Activated naive CD4-positive, alpha-beta T cell treated with anti-CD3 and anti-CD28 coated beads for 36 hours (primary cell): ENCODE measurements at regions of chr1 and their contacts with region 1.

Region 1: GRCh38 chr1:36187800-36188593 is 32.0 kb downstream of the MAP7D1 start:
- DNase-seq: peak; percentile 92
- H3K4me3 Mint-ChIP-seq: no peak overlapping the region
- H3K27ac Mint-ChIP-seq: peak overlapping the region; percentile 41
- H3K4me1 Mint-ChIP-seq: peaks cover 4% of the 10 kb centered on the region
- H3K27me3 Mint-ChIP-seq: no peaks in the 10 kb centered on the region

Region 2: DNA sequence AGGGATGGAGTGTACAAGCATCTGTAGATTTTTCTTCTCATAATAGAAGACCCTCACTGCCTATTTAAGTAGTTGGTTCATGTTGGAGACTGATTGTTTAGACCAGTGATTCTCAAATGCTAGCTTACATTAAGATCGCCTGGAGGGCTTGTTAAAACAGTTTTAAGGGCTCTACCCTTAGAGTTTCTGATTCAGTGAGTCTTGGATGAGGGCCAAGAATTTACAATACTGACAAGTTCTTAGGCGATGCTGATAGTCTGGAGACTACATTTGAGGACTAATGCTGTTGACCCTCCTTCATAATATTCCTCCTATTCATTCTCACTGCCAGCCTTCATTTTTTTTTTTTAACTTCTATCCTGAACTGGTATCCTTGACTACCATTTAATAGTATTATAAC is 272.3 kb before region 1 on chr1:
- CTCF ChIA-PET with region 1: no interaction called
- intact Hi-C with region 1: no loop called
- DNase-seq: no peak
- H3K4me3 Mint-ChIP-seq: no peak overlapping the region
- H3K27ac Mint-ChIP-seq: no peak overlapping the region
- H3K4me1 Mint-ChIP-seq: no peaks in the 10 kb centered on the region
- H3K27me3 Mint-ChIP-seq: no peaks in the 10 kb centered on the region

Region 3: GRCh38 chr1:36099681-36100341 is 88.2 kb before region 1 on chr1:
- CTCF ChIA-PET with region 1: interaction called, 10 read pairs
- intact Hi-C with region 1: loop called (anchors 1 kb)
- DNase-seq: peak; percentile 85
- H3K4me3 Mint-ChIP-seq: no peak overlapping the region
- H3K27ac Mint-ChIP-seq: no peak overlapping the region
- H3K4me1 Mint-ChIP-seq: peaks cover 4% of the 10 kb centered on the region
- H3K27me3 Mint-ChIP-seq: no peaks in the 10 kb centered on the region

Region 4: DNA sequence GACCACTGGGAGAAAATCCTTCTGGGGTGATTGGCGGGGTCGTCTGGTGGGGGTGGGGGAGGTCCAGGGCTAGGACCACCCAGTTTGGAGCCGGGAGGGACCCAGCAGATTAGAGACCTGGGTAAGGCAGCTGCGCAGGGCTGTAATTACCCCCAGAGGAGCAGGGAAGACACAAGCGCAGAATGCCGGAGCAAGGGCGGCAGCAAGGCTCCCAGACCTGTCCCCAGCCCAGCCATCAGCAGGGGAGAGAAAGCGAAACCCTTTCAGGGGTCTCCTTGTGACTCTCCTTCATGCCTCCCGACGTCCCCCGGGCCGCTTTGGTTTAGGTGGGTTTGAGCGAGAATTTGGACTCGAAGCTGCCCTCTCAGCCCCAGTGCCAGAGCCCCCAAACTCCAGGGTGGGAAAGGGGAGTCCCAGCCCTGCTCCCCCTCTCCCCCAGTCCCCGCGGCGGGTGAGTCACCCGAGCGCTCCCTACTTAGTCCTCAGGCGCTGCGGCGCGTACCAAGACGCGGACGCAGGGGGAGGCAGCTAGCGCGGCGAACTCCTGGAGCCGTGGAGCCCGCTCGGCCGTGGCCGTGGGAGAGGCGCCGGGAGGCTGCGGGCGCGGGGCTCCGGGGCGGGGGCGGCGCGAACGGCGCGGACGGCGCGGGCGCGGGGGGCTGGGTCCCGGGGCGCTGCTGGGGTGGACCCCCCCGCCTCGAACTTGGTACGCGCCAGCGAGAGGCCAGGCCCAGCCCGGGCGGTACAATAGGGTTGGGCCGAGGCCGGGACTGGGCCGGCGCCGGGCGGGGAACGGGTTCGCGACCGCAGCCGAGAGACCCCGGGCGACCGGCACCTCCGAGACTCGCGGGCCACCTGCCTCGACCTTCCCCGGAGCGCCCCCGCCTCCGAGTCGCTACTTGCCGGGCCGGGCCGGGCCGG is 32.3 kb before region 1 on chr1 and contains the start of gene MAP7D1:
- CTCF ChIA-PET with region 1: interaction called, 89 read pairs
- intact Hi-C with region 1: loop called (anchors 1 kb)
- DNase-seq: peak; percentile 88
- H3K4me3 Mint-ChIP-seq: peak within 1 kb of the TSS; percentile 90
- H3K27ac Mint-ChIP-seq: peak within 1 kb of the TSS; percentile 94
- H3K4me1 Mint-ChIP-seq: peaks cover 66% of the 10 kb centered on the region
- H3K27me3 Mint-ChIP-seq: no peaks in the 10 kb centered on the region
- total RNA-seq, gene MAP7D1: 106 TPM

Region 5: DNA sequence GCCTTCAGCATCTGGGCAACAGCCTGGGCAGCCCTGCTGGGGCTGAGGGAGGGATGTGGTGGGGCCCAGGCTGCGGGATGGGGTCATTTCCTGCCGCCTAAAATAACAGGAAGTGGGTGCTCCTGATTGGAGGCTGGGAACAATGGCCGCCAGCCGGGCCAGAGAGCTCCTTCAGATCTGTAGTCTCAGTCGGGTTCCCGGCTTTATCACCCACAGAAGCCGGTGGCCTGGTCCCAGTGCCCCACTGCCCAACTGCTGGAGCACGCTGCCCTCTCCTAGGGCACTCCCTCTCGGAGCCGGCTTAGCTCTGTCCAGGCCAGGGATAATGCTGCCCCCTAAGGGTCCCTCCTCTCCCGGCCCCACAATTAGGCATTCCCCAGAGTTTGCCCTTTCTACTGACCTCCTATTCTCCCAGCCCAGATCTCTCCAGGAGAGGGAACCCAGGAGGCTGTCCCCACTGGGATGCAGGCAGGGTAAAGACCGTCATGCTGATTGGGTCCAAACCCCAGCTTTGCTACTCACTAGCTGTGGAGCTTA is 27.0 kb before region 1 on chr1:
- CTCF ChIA-PET with region 1: interaction called, 56 read pairs
- intact Hi-C with region 1: no loop called
- DNase-seq: peak; percentile 89
- H3K4me3 Mint-ChIP-seq: peak overlapping the region; percentile 83
- H3K27ac Mint-ChIP-seq: peak overlapping the region; percentile 93
- H3K4me1 Mint-ChIP-seq: peaks cover 57% of the 10 kb centered on the region
- H3K27me3 Mint-ChIP-seq: no peaks in the 10 kb centered on the region

Region 6: GRCh38 chr1:36397378-36398230 is 209.6 kb after region 1 on chr1 and contains the start of gene LSM10:
- CTCF ChIA-PET with region 1: no interaction called
- intact Hi-C with region 1: no loop called
- DNase-seq: peak; percentile 95
- H3K4me3 Mint-ChIP-seq: peak within 1 kb of the TSS; percentile 96
- H3K27ac Mint-ChIP-seq: peak within 1 kb of the TSS; percentile 94
- H3K4me1 Mint-ChIP-seq: peaks cover 35% of the 10 kb centered on the region
- H3K27me3 Mint-ChIP-seq: no peaks in the 10 kb centered on the region
- total RNA-seq, gene LSM10: 33.5 to 36.5 TPM